Activated CD8-positive, alpha-beta T cell treated with anti-CD3 and anti-CD28 coated beads for 36 hours (primary cell): ENCODE measurements at regions of chr2 and their contacts with region 1.

Region 1: DNA sequence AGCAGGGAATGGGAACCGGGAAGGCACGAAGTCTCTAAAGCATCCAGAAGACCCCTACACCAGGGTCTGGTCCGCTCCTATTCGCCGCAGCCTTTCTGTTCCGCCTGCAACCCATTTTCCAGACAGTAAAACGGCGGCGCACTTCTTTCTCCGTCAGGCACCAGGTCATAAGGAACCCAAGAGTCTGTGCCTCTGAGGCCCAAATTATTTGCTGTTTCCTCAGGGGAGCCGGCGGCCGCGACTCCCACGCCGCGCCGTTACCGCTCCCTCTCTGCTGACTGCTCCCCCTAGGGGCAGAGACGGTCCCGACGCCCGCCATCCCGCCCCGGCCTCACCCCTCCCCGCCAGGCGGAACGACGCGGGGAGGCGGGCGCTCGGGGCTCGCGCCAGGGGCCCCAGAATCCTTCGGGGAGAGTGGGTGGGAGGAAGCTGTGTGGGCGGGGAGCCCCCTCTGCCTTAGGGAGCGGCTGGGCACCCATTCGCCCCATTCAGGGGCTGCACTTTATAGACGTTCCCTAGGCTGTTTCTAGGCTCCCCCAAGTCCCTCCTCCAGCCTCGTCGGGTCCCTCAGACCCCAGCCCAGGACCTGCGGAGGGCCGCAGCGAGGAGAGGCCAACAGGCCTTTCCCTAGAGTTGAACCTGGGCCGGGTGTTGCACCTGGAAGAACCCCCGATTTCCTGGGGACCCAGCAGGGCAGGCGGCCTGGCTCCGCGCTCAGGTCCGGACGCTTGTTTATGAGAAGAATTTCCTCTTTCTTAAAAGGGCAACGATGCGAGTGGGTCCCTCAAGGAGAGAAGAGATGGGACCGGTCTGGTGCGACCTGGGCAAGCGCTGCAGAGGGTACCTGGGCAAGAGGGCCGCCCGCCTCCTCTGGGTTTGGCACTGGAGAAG is 3.6 kb upstream of the CTDSP1 start:
- DNase-seq: peak; percentile 95
- ATAC-seq: peak; percentile 67
- H3K4me3 Mint-ChIP-seq: peak overlapping the region; percentile 86
- H3K27ac Mint-ChIP-seq: peak overlapping the region; percentile 87
- H3K4me1 Mint-ChIP-seq: peaks cover 30% of the 10 kb centered on the region
- H3K27me3 Mint-ChIP-seq: no peaks in the 10 kb centered on the region
- CTCF ChIP-seq: peak; percentile 82

Region 2: DNA sequence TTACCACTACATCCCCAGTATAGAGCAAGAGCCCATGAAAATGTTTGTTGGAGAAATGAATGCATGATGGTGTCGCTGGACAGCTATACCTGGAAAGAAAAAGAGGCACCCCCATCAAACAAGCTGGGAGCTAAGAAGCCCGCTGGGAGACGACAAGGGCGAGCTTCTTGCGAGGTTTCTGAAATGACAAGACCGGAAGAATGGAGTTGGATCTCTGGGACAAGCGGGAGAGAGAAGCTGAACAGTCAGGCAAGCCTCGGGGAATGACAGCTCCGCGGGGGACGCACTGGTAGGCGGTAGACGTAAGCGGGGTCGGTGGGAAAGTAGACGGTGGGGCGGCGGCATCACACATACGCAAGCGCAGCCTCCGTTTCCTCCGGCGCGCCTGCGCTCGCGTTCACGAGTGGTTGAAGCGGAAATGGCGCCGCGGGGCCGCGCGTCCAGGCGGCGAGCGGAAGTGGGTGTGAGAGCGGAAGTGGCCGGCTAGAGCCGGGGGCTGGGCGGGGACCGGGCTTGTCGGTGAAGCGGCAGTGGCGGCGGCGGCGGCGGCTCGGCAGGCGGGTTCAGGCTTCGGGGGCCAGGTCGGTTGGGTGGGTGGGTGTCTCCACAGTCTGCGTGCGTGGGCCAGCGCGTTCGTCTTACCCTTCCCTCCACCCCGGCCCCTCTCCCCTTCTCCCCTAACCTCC is 179.2 kb before region 1 on chr2 and contains the start of gene ARPC2:
- CTCF ChIA-PET with region 1: no interaction called
- POLR2A ChIA-PET with region 1: no interaction called
- intact Hi-C with region 1: loop called (anchors 5 kb)
- DNase-seq: peak; percentile 96
- ATAC-seq: peak; percentile 69
- H3K4me3 Mint-ChIP-seq: peak within 1 kb of the TSS; percentile 93
- H3K27ac Mint-ChIP-seq: peak within 1 kb of the TSS; percentile 97
- H3K4me1 Mint-ChIP-seq: peaks cover 24% of the 10 kb centered on the region
- H3K27me3 Mint-ChIP-seq: no peaks in the 10 kb centered on the region
- CTCF ChIP-seq: no peak
- total RNA-seq, gene ARPC2: 636 to 644 TPM

Region 3: GRCh38 chr2:218286570-218287459 is 109.2 kb before region 1 on chr2:
- CTCF ChIA-PET with region 1: interaction called, 15 read pairs
- POLR2A ChIA-PET with region 1: interaction called, 11 read pairs
- intact Hi-C with region 1: loop called (anchors 5 kb)
- DNase-seq: peak; percentile 93
- ATAC-seq: peak; percentile 78
- H3K4me3 Mint-ChIP-seq: peak overlapping the region; percentile 83
- H3K27ac Mint-ChIP-seq: peak overlapping the region; percentile 95
- H3K4me1 Mint-ChIP-seq: peaks cover 75% of the 10 kb centered on the region
- H3K27me3 Mint-ChIP-seq: no peaks in the 10 kb centered on the region
- CTCF ChIP-seq: no peak

Region 4: DNA sequence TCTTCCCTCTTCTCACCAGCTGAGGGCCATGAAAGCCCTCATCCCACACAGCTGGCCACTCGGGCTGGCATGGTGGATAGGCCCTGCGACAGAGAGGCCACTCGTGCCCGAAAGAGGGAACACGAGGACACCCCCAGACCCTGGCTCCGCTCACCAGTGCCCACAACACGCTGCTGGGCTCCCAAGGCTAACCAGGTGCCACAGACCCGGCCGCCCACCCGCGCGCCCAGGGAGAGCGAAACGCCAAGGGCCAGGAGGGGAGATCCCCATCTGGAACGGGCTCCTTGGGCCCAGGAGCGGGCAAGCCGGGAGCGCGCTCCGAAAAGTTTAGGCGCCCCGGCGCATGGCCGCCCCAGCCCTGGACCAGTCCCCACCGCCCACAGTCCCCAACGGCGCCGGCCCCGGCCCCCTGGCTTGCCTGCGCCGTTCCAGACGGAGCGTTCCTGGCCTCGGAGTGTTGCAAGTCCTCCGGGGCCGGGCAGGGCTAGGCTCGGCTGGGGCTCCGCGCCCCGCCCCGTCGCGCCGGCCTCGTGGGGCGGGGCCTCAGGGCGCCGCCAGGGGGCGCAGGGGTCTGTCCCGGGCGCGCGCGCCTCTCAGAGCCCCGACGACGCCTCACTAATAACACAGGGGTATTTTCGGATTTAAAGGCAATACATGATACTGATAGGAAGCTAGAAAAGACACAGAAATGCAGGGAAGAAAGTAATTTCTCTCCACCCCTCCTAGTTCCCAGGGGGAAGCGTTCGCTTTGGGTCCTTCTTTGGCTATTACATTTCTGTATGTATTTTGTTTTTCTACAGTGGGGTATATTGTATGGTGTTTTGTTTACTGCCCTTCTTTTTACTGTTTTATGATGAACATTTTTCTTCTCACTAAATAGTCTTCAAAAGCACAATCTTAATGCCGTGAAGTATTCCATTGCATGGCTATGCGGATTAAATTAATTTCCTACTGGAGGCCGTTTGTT is 103.7 kb before region 1 on chr2 and contains the start of gene TMBIM1:
- CTCF ChIA-PET with region 1: interaction called, 15 read pairs
- POLR2A ChIA-PET with region 1: interaction called, 11 read pairs
- intact Hi-C with region 1: loop called (anchors 5 kb)
- DNase-seq: peak; percentile 83
- ATAC-seq: peak; percentile 92
- H3K4me3 Mint-ChIP-seq: peak within 1 kb of the TSS; percentile 88
- H3K27ac Mint-ChIP-seq: peak within 1 kb of the TSS; percentile 92
- H3K4me1 Mint-ChIP-seq: peaks cover 49% of the 10 kb centered on the region
- H3K27me3 Mint-ChIP-seq: no peaks in the 10 kb centered on the region
- CTCF ChIP-seq: peak; percentile 97
- total RNA-seq, gene TMBIM1: 53.5 to 57.9 TPM

Region 5: DNA sequence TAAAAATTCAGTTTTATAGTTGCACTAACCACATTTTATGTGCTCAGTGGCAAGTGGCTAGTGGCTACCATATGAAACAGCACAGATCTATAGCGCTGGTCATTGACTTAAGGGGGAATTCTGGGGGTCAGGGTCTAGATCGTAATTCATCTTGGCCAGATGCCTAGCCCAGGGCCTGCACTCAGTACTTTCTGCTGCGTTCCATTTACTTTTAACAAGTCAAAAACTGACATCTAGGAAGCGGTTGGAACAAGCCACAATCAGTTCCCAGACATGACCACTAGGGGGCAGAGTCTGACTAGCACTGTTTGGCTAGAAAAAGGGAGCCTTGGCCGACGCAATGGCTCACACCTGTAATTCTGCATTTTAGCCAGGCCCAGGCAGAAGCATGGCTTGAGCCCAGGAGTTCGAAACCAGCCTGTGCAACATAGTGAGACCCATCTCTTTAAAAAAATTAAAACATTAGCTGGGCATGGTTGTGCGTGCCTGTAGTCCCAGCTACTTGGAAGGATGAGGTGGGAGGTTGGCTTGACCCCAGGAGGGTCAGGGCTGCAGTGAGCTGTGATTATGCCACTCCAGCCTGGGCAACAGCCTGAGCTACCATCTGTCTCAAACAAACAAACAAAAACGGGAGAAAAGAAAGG is 94.7 kb before region 1 on chr2:
- CTCF ChIA-PET with region 1: interaction called, 16 read pairs
- POLR2A ChIA-PET with region 1: interaction called, 4 read pairs
- intact Hi-C with region 1: no loop called
- DNase-seq: peak; percentile 95
- ATAC-seq: peak; percentile 97
- H3K4me3 Mint-ChIP-seq: no peak overlapping the region
- H3K27ac Mint-ChIP-seq: no peak overlapping the region
- H3K4me1 Mint-ChIP-seq: peaks cover 5% of the 10 kb centered on the region
- H3K27me3 Mint-ChIP-seq: no peaks in the 10 kb centered on the region
- CTCF ChIP-seq: peak; percentile 90

Region 6: DNA sequence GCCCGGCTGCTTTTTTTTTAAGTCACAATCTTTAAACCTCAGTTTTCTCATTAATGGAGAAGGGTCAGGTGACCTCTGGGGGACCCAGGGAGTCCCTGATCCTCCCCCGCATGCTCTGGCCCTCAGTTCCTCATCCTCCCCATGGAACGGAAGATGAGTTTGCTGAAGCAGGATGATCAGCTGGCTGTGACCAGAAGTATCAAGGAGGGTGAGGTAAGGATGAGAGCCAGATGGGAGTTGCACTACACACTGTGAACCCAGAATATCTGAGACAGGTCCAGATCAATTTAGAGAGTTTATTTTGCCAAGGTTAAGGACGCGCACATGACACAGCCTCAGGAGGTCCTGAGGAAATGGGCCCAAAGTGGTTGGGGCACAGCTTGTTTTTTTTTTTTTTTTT is 35.6 kb before region 1 on chr2:
- CTCF ChIA-PET with region 1: interaction called, 10 read pairs
- POLR2A ChIA-PET with region 1: no interaction called
- intact Hi-C with region 1: no loop called
- DNase-seq: no peak
- ATAC-seq: no peak
- H3K4me3 Mint-ChIP-seq: no peak overlapping the region
- H3K27ac Mint-ChIP-seq: no peak overlapping the region
- H3K4me1 Mint-ChIP-seq: no peaks in the 10 kb centered on the region
- H3K27me3 Mint-ChIP-seq: no peaks in the 10 kb centered on the region
- CTCF ChIP-seq: no peak

Region 7: GRCh38 chr2:218375212-218375611 is 20.8 kb before region 1 on chr2:
- CTCF ChIA-PET with region 1: no interaction called
- POLR2A ChIA-PET with region 1: no interaction called
- intact Hi-C with region 1: no loop called
- DNase-seq: no peak
- ATAC-seq: no peak
- H3K4me3 Mint-ChIP-seq: no peak overlapping the region
- H3K27ac Mint-ChIP-seq: no peak overlapping the region
- H3K4me1 Mint-ChIP-seq: no peaks in the 10 kb centered on the region
- H3K27me3 Mint-ChIP-seq: no peaks in the 10 kb centered on the region
- CTCF ChIP-seq: no peak

Region 8: DNA sequence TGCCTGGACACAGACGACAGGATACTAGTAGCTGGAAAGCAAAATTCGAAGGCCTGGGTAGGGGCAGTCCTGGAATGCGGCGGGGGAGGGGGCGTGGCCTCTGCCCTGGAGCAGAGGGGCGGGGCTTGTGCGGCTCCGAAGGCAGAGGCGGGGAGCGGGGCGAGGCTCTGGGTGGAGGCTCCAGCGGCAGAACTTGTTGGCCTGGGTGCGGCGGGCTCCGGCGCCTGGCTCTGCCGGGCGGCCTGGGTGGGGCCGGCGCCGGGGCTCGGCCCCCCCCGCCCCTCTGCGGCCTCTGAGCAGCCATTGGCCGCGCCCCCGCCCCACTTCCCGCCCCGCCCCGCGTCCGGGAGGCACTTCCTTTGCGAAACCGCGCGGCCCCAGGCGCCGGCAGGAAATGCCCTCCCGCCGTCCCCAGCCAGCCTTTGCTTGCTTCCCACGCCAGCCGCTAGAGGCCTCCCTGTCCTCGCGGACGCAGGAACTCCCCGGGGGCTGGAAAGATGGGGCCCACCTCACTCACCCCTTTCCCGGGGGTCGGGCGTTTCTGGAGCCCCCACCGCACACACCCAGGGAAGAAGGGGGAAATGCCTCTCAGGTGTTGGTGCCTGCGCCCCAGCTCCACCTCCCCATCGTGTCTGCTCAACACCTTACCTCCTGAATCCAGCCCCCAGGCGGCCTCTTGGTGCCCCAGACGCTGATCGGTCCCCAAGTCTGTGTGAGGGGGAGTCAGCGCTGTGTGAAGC is 10.3 kb after region 1 on chr2:
- CTCF ChIA-PET with region 1: interaction called, 5 read pairs
- POLR2A ChIA-PET with region 1: interaction called, 21 read pairs
- intact Hi-C with region 1: no loop called
- DNase-seq: peak; percentile 97
- ATAC-seq: peak; percentile 86
- H3K4me3 Mint-ChIP-seq: peak overlapping the region; percentile 66
- H3K27ac Mint-ChIP-seq: peak overlapping the region; percentile 72
- H3K4me1 Mint-ChIP-seq: peaks cover 44% of the 10 kb centered on the region
- H3K27me3 Mint-ChIP-seq: peaks cover 6% of the 10 kb centered on the region
- CTCF ChIP-seq: peak; percentile 65